ENCODE measurements at regions of chr22 and their contacts with region 1.

Region 1: GRCh38 chr22:24156913-24157821 is 24.1 kb upstream of the SUSD2 start:
- DNase-seq: peak; percentile 87 to 93 (median 93)
- H3K4me3 ChIP-seq: peak overlapping the region; percentile 66 to 95 (median 84)
- H3K27ac ChIP-seq: peak overlapping the region in 1 of 2 experiments; percentile 57
- H3K4me1 ChIP-seq: peaks cover 4 to 76% (median 69%) of the 10 kb centered on the region in 4 experiments
- H3K27me3 ChIP-seq: no peaks in the 10 kb centered on the region

Region 2: DNA sequence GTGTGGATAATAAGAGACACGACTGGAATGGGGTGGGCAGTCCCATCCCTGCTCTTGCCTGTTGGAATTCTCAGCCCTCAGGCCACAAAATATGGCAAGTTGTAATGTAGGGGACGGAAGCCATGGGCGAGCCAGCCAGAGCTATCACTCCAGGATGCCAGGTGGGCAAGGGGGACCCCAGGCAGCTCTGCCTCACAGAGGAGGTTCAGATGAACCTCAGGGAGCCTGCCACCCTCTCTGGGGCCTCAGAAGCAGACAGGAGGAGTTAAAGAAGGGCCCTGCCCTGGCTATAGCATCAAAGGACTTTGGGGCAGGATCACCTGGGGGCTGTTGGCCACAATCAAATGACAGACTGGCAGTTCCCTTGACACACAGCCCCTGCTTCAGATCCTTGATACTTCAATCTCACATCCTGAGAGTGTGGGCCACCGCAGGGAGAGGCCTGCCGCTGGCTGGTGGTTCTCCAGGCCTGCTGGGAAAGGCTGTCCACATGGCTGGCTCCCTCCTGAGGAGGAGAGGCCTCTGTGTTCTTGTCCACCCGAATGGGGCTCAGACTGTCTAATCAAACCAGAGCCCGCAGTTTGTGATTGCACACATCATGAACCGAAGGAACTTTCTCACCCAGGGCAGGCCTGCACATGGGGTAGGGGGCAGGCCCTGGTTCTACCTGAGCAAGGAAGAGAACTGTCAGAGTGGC is 608.5 kb before region 1 on chr22:
- CTCF ChIA-PET with region 1: no interaction called
- POLR2A ChIA-PET with region 1: no interaction called
- DNase-seq: no peak
- H3K4me3 ChIP-seq: no peak overlapping the region
- H3K27ac ChIP-seq: no peak overlapping the region
- H3K4me1 ChIP-seq: peaks cover 1 to 8% (median 3%) of the 10 kb centered on the region in 4 experiments
- H3K27me3 ChIP-seq: no peaks in the 10 kb centered on the region

Region 3: DNA sequence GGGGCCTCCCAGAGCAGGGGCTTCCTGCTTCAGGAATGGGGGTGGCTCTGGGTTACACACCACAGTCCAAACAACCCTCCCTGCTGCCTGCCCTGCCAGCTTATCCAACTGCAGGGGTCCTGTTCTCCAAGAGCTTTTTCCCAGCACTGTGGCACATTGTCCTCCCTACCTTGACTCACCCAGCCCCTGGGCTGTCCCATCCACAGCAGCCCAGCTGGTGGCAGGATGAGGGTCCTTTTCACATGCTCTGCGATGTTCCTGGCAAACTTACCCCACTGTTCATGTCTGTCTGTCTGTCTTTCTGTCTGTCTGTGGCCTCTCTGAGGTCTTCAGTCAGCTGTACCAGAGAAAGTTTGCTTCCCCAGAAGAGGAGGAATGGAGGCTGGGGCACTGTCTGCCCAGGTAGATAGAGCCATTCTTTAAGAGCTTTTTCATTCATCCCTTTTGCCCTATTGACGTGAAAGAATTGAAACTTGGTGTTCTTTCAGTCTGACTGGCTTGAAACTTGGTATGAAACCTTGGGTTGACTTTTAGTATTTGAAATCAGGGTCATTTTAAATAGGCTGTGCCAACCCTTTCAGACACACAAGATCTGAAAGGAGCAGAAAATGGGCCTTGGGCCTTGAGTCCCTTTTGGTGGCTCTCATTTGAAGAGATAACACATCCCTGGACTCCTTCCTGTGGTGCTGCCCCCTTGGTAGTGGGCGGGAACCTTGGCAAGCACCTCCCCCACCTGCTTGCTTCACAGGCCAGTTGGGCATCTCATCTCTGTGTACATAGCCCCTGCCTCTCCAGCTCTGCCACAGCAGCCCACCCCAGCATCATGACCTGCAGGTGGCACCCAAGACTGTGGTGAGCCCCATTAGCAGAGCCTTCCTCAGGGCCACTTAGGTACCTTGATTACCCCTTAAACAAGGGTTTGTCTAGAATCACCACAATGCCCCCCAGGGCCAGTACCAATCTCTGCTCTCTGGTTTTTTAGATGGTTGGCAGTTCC is 50.5 kb before region 1 on chr22:
- CTCF ChIA-PET with region 1: interaction called, 1,213 read pairs
- POLR2A ChIA-PET with region 1: no interaction called
- DNase-seq: peak; percentile 31 to 49 (median 42)
- H3K4me3 ChIP-seq: no peak overlapping the region
- H3K27ac ChIP-seq: no peak overlapping the region
- H3K4me1 ChIP-seq: peaks cover 0 to 2% (median 1%) of the 10 kb centered on the region in 4 experiments
- H3K27me3 ChIP-seq: no peaks in the 10 kb centered on the region

Region 4: DNA sequence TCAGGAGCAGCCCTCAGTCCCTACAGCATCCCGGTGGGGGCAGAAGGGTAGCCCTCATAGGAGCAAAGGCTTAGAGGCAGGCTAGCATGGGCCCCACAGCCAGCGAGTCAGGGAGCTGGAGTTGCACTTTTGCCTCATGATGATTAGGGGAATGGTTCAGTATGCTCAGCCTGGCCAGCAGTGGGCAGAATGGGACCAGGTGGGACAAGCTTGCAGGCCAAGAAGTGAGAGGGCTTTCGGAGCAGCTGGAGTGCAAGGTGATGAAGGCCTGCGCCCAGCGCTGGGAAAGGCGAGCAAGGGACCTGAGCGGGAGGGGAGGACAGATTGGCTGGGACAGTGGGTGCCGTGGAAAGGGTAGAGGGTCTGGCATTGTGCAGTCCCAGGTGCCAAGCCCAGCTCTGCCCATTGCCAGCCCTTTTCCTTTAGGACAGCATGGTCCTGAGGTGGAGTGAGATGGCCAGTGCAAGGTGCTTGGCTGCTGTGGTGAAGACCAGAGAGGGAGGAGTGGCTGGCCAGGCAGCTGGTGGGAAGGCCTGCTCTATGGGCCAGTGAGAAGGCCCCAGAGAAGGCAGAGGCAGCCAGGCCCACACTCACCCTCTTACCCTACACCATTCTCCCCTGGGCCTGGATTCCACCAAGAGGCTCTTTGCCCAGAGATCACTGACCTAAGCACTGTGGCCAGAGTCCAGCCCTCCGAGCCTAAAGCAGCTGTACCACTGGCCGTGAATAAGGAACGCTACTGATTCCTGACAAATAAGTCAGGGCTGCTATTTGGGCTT is 23.8 kb before region 1 on chr22:
- CTCF ChIA-PET with region 1: interaction called, 1,213 read pairs
- POLR2A ChIA-PET with region 1: interaction called, 19 read pairs
- DNase-seq: peak; percentile 47 to 66 (median 66)
- H3K4me3 ChIP-seq: no peak overlapping the region
- H3K27ac ChIP-seq: no peak overlapping the region
- H3K4me1 ChIP-seq: peaks cover 6 to 42% (median 38%) of the 10 kb centered on the region in 4 experiments
- H3K27me3 ChIP-seq: no peaks in the 10 kb centered on the region

Region 5: DNA sequence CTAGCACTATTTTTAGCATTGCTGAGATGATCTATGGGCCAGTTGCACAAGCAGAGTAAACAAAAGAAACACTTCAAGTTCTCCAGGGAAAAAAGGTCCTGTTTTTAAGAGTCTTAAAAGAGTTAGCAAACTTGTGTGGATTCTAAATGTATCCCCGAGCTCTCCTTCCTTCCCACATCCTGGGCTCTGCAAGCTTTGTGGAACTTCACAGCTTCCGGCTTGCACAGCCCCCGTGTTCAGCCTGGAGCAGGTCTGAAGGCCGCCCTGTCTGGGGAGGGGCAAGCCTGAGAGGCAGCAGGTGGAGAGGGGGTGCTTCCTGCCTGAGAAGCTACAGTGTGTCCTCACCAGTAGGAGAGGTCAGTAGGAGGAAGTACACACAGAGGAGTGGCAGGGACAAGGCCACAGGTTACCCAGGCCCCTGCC is 11.0 kb before region 1 on chr22:
- CTCF ChIA-PET with region 1: interaction called, 1,213 read pairs
- POLR2A ChIA-PET with region 1: interaction called, 18 read pairs
- DNase-seq: peak in 2 of 3 donors; percentile 44 to 59
- H3K4me3 ChIP-seq: peak overlapping the region in 4 of 7 experiments; percentile 37 to 55 (median 48)
- H3K27ac ChIP-seq: peak overlapping the region in 1 of 2 experiments; percentile 63
- H3K4me1 ChIP-seq: peaks cover 36 to 74% (median 70%) of the 10 kb centered on the region in 4 experiments
- H3K27me3 ChIP-seq: no peaks in the 10 kb centered on the region

Measured in common myeloid progenitor, CD34-positive (primary cell).